Posterior cingulate gyrus (tissue), 11 donors: ENCODE measurements at regions of chr1 and their contacts with region 1.

Region 1: DNA sequence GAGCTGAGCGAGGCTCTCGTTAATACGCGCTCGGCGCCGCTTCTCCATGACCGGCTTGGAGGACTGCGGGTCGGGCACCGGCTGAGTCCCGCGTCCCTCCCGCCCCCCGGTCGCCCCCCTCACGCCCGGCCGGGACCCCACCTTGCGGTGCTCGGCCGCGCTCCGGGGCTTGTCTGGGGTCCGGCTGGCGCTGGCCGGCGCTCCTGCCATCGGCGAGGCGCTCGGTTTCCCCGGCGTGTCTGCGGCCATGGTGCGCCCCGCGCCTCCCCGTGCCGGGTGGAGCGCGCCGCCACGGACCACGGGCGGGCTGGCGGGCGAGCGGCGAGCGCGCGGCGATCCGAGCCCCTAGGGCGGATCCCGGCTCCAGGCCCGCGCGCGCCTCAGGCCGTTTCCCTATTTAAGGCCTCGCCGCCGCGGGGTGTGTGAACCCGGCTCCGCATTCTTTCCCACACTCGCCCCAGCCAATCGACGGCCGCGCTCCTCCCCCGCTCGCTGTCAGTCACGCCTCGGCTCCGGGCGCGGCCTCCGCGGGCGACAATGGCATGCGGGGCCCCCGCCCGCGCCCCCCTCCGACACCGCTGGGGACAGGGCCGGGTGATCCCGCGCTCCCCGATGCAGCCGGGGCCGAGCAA is at the start of gene HES4:
- DNase-seq: peak in 9 of 10 donors; percentile 54 to 95 (median 75)

Region 2: DNA sequence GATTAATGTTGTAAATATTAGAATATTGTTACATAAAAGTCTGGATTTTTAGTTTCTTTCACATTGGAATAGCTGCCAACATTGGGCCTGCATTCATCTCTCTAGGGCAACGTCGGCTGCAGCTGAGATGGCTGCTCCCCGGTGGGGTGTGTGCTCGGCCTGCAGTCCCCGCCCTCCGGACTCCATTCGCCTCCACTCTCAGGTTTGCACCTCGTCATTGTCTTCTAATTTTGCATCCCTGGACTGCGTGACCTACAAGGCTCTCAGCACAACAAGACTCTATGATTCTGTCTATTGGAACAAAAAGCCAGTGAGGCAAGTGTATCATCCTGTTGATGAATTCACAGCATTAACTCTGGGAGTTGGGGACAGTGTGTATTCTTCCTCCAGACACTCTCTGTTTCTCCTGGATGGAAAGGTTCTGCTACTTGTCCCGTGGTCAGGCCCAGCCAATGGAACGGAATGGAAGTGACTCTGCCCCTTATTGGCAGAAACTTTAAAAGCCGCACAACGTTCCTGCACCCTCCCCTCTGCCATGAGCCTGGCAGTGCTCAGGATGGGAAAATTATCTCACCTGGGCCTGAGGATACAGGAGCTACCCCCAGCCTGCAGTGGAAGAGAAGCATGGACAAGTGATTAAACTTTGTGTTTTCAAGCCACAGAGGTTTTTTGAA is 181.1 kb before region 1 on chr1:
- intact Hi-C with region 1: no loop called
- DNase-seq: no peak

Region 3: GRCh38 chr1:904310-904950 is 95.4 kb before region 1 on chr1:
- intact Hi-C with region 1: loop called (anchors 5 kb)
- DNase-seq: peak in 9 of 10 donors; percentile 60 to 96 (median 78)

Region 4: DNA sequence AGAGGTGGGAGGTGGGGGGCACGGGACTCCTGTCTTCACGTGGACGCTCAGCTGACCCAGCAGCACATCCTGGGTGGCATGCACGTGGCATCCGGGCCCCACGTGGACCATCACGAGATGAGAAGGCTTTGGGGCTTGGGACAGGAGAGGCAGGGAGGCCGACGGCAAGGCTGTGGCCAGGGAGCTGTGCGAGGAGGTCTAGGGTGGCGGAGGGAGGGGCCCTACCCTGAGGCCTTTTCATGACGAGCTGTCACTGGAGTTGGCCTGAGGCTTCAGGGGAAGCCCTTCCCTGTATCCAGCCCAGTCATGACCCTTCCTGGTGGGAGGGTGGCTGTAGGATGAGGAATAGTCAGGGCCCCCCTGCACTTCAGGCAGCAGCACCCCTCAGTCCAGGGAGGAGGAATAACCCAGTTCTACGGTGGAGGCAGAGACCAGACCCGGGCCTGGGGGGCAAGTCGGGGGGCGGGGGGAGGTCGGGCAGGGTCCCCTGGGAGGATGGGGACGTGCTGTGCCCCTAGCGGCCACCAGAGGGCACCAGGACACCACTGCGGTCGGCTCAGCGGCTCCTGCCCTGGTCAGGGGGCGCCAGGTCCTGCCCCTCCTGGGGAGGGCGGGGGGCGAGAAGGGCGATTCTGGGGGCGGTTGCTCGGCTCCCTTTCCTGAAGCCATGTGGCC is 15.9 kb before region 1 on chr1:
- intact Hi-C with region 1: loop called (anchors 1 kb)
- DNase-seq: peak in 4 of 10 donors; percentile 50 to 92 (median 64)

Region 5: GRCh38 chr1:1206376-1207260 is 206.8 kb after region 1 on chr1 and contains the start of gene TNFRSF18:
- intact Hi-C with region 1: no loop called
- DNase-seq: peak in 3 of 10 donors; percentile 58 to 79 (median 72)

Region 6: GRCh38 chr1:1489231-1489630 is 489.4 kb after region 1 on chr1:
- intact Hi-C with region 1: no loop called
- DNase-seq: no peak

Region 7: GRCh38 chr1:1906185-1907097 is 906.6 kb after region 1 on chr1:
- intact Hi-C with region 1: no loop called
- DNase-seq: peak; percentile 63 to 98 (median 86)